ENCODE measurements at regions of chr17 and their contacts with region 1.

Region 1: GRCh38 chr17:66255112-66255511 is 25.9 kb upstream of the APOH start:
- DNase-seq: peak; percentile 80
- H3K4me3 ChIP-seq: no peak overlapping the region
- H3K27ac ChIP-seq: no peak overlapping the region
- H3K4me1 ChIP-seq: no peaks in the 10 kb centered on the region
- CTCF ChIP-seq: peak; percentile 94

Region 2: GRCh38 chr17:66268247-66268927 is 13.3 kb after region 1 on chr17:
- CTCF ChIA-PET with region 1: no interaction called
- POLR2A ChIA-PET with region 1: no interaction called
- intact Hi-C with region 1: no loop called
- DNase-seq: no peak
- H3K4me3 ChIP-seq: no peak overlapping the region
- H3K27ac ChIP-seq: no peak overlapping the region
- H3K4me1 ChIP-seq: no peaks in the 10 kb centered on the region
- CTCF ChIP-seq: no peak

Region 3: GRCh38 chr17:66301797-66302741 is 47.0 kb after region 1 on chr17 and contains the start of gene PRKCA:
- CTCF ChIA-PET with region 1: no interaction called
- POLR2A ChIA-PET with region 1: no interaction called
- intact Hi-C with region 1: loop called (anchors 5 kb)
- DNase-seq: peak; percentile 81
- H3K4me3 ChIP-seq: peak within 1 kb of the TSS; percentile 78
- H3K27ac ChIP-seq: no peak within 1 kb of the TSS
- H3K4me1 ChIP-seq: peaks cover 28% of the 10 kb centered on the region
- CTCF ChIP-seq: no peak
- total RNA-seq, gene PRKCA: 5.2 and 6.6 TPM in 2 replicates

Region 4: GRCh38 chr17:66459811-66460270 is 204.7 kb after region 1 on chr17:
- CTCF ChIA-PET with region 1: no interaction called
- POLR2A ChIA-PET with region 1: no interaction called
- intact Hi-C with region 1: no loop called
- DNase-seq: no peak
- H3K4me3 ChIP-seq: no peak overlapping the region
- H3K27ac ChIP-seq: no peak overlapping the region
- H3K4me1 ChIP-seq: no peaks in the 10 kb centered on the region
- CTCF ChIP-seq: no peak

Region 5: DNA sequence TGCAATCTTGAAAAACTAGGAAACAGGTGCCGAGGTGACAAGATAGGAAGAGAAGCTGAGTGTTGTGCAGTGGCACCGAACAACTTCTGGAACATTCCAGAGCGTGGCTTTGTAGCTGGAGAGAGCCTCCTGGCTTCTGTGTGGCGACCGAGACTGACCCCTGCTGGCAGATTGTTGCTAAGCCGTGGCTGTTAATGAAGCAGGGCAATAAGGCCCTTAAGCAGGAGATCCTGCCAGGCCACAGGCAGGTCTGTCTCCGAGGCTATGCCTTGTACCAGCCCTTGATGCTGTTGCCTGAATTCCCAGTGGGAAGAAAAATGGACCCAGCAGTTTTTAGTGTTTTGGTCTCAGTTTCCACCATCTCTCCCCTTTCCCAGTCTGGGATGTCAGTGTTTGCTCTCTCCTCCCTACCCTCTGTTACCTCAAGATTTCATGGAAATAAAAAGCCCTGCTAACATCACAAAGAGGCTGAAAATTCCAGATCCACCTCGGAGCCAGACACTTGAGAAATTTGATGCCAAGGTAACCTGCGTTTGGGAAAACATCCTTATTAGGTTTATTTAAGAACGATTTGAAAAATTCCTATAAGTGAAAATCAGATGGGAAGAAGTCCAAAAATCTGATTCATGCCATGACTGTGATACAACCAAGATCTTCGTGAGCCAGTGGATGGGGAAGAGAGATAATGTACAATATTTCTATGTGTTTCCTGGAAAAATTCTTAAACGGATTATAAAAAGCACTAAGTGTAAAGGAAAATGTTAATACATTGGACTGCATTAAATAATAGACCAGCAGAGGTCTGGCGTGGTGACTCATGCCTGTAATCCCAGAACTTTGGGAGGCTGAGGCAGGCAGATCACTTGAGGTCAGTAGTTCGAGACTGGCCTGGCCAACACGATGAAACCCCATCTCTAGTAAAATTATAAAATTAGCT is 312.4 kb after region 1 on chr17:
- CTCF ChIA-PET with region 1: no interaction called
- POLR2A ChIA-PET with region 1: interaction called, 5 read pairs
- intact Hi-C with region 1: loop called (anchors 1 kb)
- DNase-seq: peak; percentile 73
- H3K4me3 ChIP-seq: no peak overlapping the region
- H3K27ac ChIP-seq: no peak overlapping the region
- H3K4me1 ChIP-seq: no peaks in the 10 kb centered on the region
- CTCF ChIP-seq: peak; percentile 93

Region 6: DNA sequence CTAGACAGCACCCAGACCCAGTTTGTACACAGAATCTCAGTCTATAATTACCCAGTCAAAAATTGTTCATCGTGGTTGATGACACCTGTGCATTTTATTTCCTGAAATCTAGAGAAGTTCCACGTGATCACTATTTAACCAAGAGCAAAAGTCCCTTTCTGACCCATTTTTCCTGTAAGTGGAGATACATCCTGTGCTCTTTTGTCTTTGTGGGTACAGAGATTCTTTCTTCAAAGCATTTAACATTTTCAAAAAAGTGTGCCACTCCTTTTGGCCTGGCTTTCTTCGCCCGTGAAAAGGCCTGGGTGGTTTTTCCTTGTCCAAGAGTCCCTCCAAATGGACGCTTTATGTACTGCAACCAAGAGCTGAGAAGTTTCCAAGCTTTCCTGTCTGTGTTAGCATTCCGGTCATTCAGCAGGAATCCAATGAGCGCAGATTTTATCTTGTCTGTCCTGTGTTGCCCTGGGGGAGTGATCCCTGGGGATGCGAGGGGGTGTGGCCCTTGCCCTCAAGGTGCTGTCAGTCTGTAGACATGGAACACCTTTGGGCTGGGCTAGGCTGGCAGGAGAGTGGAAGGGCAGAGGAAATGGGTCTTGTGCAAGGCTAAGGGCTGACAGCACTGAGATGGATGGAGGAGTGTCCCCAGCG is 418.7 kb after region 1 on chr17:
- CTCF ChIA-PET with region 1: no interaction called
- POLR2A ChIA-PET with region 1: no interaction called
- intact Hi-C with region 1: loop called (anchors 5 kb)
- DNase-seq: peak; percentile 41
- H3K4me3 ChIP-seq: no peak overlapping the region
- H3K27ac ChIP-seq: no peak overlapping the region
- H3K4me1 ChIP-seq: peaks cover 14% of the 10 kb centered on the region
- CTCF ChIP-seq: peak; percentile 73

Region 7: GRCh38 chr17:66906321-66907278 is 651.5 kb after region 1 on chr17:
- CTCF ChIA-PET with region 1: no interaction called
- POLR2A ChIA-PET with region 1: no interaction called
- intact Hi-C with region 1: loop called (anchors 5 kb)
- DNase-seq: peak; percentile 69
- H3K4me3 ChIP-seq: no peak overlapping the region
- H3K27ac ChIP-seq: no peak overlapping the region
- H3K4me1 ChIP-seq: no peaks in the 10 kb centered on the region
- CTCF ChIP-seq: peak; percentile 96